Calu3 (cell line): ENCODE measurements at regions of chr3 and their contacts with region 1.

Region 1: DNA sequence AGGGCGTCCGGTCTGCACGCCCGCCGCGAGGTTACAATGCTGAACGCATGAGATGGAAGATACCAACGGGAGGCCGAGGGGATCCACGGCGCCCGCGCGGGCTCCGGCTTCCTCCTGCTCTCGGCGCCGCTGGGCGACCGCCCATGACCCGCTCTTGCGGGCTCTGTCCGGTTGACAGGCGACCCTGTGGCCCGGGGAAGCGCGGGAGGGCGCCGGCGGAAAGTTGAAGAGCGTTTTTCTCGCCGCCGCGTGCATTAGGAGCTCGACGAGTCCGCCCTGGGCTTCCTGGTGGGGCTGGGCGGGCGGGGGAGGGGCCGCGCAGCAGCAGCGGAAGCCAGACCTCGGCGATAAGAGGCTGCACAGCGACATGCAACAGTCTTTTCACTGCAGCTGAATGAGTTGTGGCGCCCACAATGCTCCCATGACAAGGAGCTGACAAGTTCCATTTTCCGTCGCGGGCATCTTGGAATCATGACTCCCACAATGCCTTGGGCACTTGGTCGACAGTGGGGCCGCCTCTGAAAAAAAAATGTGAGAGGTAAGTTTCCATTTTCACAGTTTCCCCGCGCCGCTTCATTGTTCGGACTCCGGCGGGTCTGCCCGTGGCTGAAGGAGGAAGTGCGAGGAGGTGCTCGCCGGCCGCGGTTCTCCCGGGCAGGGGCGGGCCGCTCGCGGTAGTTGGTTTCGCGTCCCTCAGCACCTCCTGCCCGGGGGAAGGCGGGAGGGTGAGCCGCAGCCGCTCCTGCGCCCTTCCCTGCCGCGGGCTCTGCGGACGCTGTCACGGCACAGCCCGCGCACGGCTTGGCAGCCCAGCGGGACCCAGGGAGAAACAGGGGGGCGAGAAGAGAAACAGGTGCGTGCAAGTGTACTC is at the start of gene MBNL1:
- DNase-seq: peak; percentile 80
- H3K4me3 Mint-ChIP-seq: peak within 1 kb of the TSS; percentile 88
- H3K27ac Mint-ChIP-seq: peak within 1 kb of the TSS; percentile 94
- H3K4me1 Mint-ChIP-seq: peaks cover 46% of the 10 kb centered on the region
- H3K27me3 Mint-ChIP-seq: no peaks in the 10 kb centered on the region
- CTCF ChIP-seq: no peak
- total RNA-seq, gene MBNL1: 164 and 183 TPM in 2 replicates

Region 2: DNA sequence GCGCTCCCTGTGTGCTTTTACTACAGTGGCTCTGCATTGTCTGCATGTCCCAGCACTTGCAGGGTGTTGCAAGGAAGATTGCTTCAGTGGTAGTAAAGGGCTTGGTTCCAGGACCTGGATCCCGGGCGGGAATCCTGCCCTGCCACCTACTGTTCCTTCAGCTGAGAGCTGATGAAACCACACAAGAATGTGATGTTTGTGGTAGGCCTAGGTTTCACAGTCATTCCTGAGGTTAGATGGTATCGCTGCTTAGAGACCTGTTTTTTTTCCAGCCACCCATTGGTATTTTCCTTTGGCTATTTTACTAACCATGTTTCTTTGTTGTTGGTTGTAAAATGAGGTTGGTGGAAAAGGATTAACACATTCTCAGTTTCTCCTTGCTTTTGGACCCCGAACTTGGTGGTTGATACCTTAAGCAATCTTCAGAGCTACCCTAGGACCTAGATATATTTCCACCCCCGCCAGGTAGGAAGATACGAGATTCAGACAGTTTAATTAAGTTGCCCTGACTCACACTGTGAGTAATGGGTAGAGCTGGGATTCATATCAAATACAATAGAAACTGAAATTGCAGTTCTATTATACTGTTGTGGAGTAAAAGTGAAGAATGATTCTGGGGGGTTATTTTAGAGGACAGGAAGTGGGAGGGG is 963.6 kb before region 1 on chr3:
- CTCF ChIA-PET with region 1: no interaction called
- intact Hi-C with region 1: no loop called
- DNase-seq: peak; percentile 91
- H3K4me3 Mint-ChIP-seq: peak overlapping the region; percentile 50
- H3K27ac Mint-ChIP-seq: peak overlapping the region; percentile 91
- H3K4me1 Mint-ChIP-seq: peaks cover 53% of the 10 kb centered on the region
- H3K27me3 Mint-ChIP-seq: no peaks in the 10 kb centered on the region
- CTCF ChIP-seq: no peak

Region 3: GRCh38 chr3:151439652-151440129 is 829.1 kb before region 1 on chr3:
- CTCF ChIA-PET with region 1: no interaction called
- intact Hi-C with region 1: loop called (anchors 10 kb)
- DNase-seq: peak; percentile 66
- H3K4me3 Mint-ChIP-seq: no peak overlapping the region
- H3K27ac Mint-ChIP-seq: no peak overlapping the region
- H3K4me1 Mint-ChIP-seq: peaks cover 8% of the 10 kb centered on the region
- H3K27me3 Mint-ChIP-seq: no peaks in the 10 kb centered on the region
- CTCF ChIP-seq: peak; percentile 88

Region 4: DNA sequence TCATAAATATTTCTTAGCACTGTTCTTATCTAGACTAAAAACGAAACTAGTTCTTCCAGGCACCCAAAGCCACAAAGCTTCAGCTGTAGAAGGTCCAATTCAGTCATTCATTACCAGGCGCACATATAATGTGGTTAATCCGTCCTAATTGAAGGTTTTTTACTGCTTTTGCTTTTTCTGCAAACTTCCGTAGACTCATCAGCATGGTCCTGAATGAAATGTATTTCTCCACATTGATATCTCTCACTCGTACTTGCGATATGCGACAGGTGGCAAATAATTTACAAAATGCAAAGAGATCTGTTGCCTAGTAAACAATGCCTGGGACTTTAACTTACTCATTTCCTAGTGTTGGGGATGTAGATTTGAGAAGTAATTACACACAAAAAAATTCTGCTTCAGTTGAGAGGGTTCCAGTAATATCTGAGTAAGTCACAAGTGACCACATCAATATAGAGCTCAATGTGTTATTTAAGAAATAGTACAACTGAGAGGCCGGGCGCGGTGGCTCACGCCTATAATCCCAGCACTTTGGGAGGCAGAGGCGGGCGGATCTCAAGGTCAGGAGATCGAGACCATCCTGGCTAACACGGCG is 75.0 kb before region 1 on chr3:
- CTCF ChIA-PET with region 1: interaction called, 3 read pairs
- intact Hi-C with region 1: loop called (anchors 5 kb)
- DNase-seq: peak; percentile 9
- H3K4me3 Mint-ChIP-seq: peak overlapping the region; percentile 68
- H3K27ac Mint-ChIP-seq: peak overlapping the region; percentile 23
- H3K4me1 Mint-ChIP-seq: peaks cover 8% of the 10 kb centered on the region
- H3K27me3 Mint-ChIP-seq: no peaks in the 10 kb centered on the region
- CTCF ChIP-seq: no peak

Region 5: DNA sequence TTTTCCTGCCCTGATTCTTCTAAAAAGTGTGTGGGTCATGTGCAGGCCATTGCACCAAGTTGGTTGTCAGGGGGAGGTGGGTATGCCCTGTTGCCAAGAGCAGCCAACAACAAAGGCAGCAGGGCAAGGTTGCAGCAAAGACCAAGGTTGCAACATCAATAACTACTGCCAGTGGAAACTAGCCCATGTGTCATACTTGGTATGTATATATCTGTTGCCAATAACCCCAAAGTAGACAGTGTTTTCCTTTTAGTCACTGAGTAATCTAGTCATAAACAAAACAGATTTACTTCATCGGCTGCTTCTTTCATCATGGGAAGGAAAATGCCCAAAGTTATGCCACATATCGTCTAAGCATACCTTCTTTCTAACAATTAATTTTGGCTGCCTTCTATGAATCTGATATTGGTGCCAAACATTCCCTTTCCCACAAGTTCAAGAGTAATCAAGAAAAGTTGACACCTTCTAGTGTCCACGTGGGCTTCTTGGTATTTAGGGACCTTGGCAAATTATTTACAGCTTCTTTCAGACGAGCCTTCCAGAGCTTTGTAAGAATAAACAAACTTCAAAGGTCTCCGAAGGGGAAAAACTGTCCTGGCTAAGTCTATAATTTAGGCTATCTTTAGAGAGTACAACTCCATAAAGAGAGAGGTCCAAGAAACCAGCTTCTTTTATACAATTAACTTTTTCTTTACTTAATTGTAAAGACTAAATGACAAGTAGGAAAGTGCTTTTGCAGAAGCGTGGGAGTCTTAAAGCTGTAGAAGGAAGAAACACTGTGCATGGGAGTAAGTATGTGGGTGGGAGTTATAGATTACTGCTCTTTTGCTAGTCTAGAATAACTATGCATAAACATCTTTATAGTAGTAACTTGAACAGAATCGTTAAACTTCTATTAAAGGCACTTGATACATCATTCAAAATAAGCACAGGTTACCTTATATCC is 10.1 kb before region 1 on chr3:
- CTCF ChIA-PET with region 1: interaction called, 11 read pairs
- intact Hi-C with region 1: no loop called
- DNase-seq: peak; percentile 85
- H3K4me3 Mint-ChIP-seq: peak overlapping the region; percentile 25
- H3K27ac Mint-ChIP-seq: peak overlapping the region; percentile 80
- H3K4me1 Mint-ChIP-seq: peaks cover 30% of the 10 kb centered on the region
- H3K27me3 Mint-ChIP-seq: no peaks in the 10 kb centered on the region
- CTCF ChIP-seq: no peak

Region 6: DNA sequence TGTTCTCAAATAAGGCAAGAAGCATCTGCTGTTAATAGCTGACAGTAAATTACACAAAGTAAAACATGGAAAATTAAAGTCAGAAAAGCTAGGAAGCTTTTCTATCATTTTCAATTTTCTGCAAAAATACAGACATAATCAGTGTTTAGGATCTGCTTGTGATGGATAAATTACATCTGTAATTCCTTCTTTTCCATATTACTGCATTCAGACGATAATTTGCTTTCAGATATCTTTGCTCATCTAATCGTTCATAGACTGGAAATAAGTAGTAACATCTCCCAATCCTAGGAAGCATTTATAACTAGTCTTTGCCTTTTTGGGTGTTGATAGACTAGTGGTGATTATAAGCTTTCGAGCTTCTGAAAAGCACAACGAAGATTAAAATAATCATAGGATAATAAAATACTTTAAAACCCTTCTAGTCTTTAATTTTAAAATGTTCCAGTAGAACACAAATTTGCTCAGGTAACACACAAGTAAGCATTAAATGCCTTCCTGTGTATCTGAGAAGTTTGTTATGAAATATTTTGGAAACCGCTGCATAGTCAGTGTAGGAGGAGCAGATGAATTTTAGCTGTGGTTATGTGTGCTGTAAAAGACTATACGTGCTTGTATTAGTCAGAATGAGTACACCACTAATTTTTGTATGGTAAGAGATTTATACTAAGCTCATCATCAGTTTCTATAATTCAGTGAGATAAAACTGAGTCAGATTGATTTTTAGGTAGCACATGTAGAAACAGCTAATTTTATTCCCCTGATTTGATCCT is 40.9 kb after region 1 on chr3:
- CTCF ChIA-PET with region 1: interaction called, 5 read pairs
- intact Hi-C with region 1: loop called (anchors 2 kb)
- DNase-seq: no peak
- H3K4me3 Mint-ChIP-seq: no peak overlapping the region
- H3K27ac Mint-ChIP-seq: peak overlapping the region; percentile 72
- H3K4me1 Mint-ChIP-seq: peaks cover 59% of the 10 kb centered on the region
- H3K27me3 Mint-ChIP-seq: no peaks in the 10 kb centered on the region
- CTCF ChIP-seq: no peak

Region 7: DNA sequence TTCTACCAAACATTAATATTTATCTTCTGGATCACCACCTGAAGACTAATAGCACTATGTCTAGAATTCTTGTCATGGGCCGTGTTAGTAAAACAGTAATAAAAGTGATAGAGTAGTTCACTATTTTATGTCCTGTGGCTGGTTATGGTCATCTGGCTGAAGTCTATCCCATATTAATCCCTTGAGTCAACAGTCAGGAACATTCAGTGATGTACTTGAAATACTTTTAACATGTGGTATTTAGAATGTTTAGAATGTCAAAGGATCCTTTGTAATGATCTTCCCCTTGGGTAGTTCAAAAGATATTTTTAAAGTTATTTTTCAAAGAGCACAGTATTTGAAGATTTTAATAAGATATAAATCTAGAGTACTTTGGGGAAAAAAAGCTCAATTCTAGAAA is 117.0 kb after region 1 on chr3:
- CTCF ChIA-PET with region 1: no interaction called
- intact Hi-C with region 1: loop called (anchors 2 kb)
- DNase-seq: no peak
- H3K4me3 Mint-ChIP-seq: no peak overlapping the region
- H3K27ac Mint-ChIP-seq: peak overlapping the region; percentile 45
- H3K4me1 Mint-ChIP-seq: peaks cover 64% of the 10 kb centered on the region
- H3K27me3 Mint-ChIP-seq: no peaks in the 10 kb centered on the region
- CTCF ChIP-seq: no peak

Region 8: GRCh38 chr3:152444029-152444641 is 175.3 kb after region 1 on chr3:
- CTCF ChIA-PET with region 1: interaction called, 3 read pairs
- intact Hi-C with region 1: loop called (anchors 2 kb)
- DNase-seq: no peak
- H3K4me3 Mint-ChIP-seq: no peak overlapping the region
- H3K27ac Mint-ChIP-seq: no peak overlapping the region
- H3K4me1 Mint-ChIP-seq: peaks cover 22% of the 10 kb centered on the region
- H3K27me3 Mint-ChIP-seq: no peaks in the 10 kb centered on the region
- CTCF ChIP-seq: peak; percentile 63

Region 9: GRCh38 chr3:152676810-152677379 is 408.1 kb after region 1 on chr3:
- CTCF ChIA-PET with region 1: no interaction called
- intact Hi-C with region 1: no loop called
- DNase-seq: no peak
- H3K4me3 Mint-ChIP-seq: no peak overlapping the region
- H3K27ac Mint-ChIP-seq: no peak overlapping the region
- H3K4me1 Mint-ChIP-seq: no peaks in the 10 kb centered on the region
- H3K27me3 Mint-ChIP-seq: no peaks in the 10 kb centered on the region
- CTCF ChIP-seq: no peak